ENCODE measurements at regions of chr1 and their contacts with region 1.

Region 1: DNA sequence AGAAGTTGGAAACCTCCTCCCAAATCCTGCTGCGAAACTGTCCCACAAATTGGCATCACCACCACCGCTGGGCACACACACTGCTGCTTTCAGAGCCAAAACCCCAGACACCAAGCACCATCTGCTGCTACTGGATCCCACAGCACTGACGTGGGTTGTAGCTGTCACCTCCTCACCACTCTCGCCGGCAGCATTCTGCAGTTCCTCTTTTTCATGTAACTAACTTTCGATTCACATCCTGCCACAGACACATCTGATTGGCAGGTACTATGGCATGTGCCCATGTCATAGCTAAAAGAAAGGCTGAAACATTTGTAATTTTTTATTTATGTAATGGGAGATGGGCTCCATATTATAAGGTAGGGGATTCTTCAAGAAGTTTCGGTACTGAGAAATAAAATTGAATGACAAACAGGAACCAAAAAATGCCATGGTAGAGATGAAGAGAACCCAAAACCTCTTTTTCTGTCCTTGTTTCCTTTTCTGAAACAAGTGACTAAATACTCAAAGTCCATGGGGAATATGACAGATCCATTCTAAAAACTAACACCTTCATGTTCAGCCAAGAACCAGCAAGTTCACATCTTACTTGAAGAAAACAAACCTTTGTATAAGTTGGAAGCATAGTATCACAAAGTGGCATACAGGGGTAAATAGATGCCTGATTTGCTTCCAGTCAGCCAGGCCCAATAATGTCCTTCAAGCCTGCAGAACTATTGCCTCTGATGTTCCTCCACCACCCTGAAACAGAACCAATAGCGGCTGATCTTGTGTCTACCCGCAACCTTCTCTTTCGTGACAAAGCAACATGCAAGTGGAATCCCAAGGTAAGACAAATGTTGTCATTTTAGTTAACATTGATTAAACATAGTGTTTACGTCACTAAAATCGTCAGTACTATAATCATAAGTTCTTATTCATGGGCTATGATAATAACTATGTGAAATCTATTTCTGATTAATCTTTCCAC is 26.6 kb upstream of the RGS13 start:
- DNase-seq: no peak
- H3K4me3 ChIP-seq: no peak overlapping the region
- H3K27ac ChIP-seq: no peak overlapping the region
- H3K4me1 ChIP-seq: peaks cover 7% of the 10 kb centered on the region
- H3K27me3 ChIP-seq: no peaks in the 10 kb centered on the region
- CTCF ChIP-seq: no peak

Region 2: GRCh38 chr1:193019442-193020026 is 410.1 kb after region 1 on chr1:
- CTCF ChIA-PET with region 1: no interaction called
- POLR2A ChIA-PET with region 1: no interaction called
- intact Hi-C with region 1: loop called (anchors 10 kb)
- DNase-seq: peak in 1 of 2 experiments; percentile 47
- H3K4me3 ChIP-seq: no peak overlapping the region
- H3K27ac ChIP-seq: no peak overlapping the region
- H3K4me1 ChIP-seq: no peaks in the 10 kb centered on the region
- H3K27me3 ChIP-seq: no peaks in the 10 kb centered on the region
- CTCF ChIP-seq: peak; percentile 71

Region 3: GRCh38 chr1:193111641-193112090 is 502.3 kb after region 1 on chr1:
- CTCF ChIA-PET with region 1: no interaction called
- POLR2A ChIA-PET with region 1: no interaction called
- intact Hi-C with region 1: no loop called
- DNase-seq: peak; percentile 57 to 59
- H3K4me3 ChIP-seq: peak overlapping the region; percentile 38; the same call in 1 of the 2 replicates
- H3K27ac ChIP-seq: peak overlapping the region; percentile 83
- H3K4me1 ChIP-seq: peaks cover 38% of the 10 kb centered on the region
- H3K27me3 ChIP-seq: no peaks in the 10 kb centered on the region
- CTCF ChIP-seq: no peak

Measured in PC-9 (cell line).